ENCODE measurements at regions of chr11 and their contacts with region 1.

Region 1: GRCh38 chr11:65497141-65498041 is 1.5 kb upstream of the MALAT1 start:
- DNase-seq: peak; percentile 100
- ATAC-seq: peak; percentile 87

Region 2: GRCh38 chr11:65432686-65433582 is 64.5 kb before region 1 on chr11:
- intact Hi-C with region 1: no loop called
- DNase-seq: no peak
- ATAC-seq: no peak

Region 3: DNA sequence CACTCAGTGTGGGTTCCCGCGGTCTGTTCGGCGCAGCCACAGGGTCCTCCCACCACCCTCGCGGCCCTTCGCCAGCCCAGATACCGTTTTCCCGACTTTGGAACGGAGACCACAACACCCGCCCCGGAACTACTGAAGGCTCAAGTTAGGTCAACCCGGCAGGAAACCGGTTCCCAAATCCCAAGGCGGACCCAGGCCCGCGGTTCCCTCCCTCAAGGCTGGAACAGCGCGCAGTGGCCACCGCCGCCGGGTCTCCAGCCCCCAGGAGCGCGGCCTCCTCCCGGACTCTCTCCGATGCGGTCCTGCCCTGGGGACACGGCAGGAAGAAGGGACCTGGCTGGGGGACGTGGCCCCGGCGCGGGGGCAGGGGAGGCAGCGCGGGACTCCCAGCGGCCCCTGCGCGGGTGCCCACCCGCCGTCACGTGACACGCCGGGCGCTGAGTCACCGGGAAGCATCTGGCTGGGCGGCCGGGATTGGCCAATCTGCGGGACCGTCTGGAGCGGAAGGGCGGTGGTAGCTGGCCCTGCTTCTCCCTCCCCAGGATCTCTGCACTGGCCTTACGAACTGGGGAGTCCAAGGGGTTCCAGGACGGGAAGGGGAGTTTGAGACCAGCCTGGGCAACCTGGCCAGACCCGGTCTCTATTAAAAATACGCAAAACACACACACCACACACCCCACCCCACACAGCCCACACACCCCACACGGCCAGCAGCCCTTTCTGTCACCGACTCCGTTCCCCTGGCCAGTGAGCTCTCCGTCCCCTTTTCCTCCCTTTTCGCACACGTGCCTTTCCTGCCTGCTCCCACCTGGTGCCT is 20.0 kb before region 1 on chr11:
- intact Hi-C with region 1: loop called (anchors 1 kb)
- DNase-seq: peak; percentile 99
- ATAC-seq: peak; percentile 88

Measured in Right ventricle myocardium inferior (tissue), 1 donor.